Tibial artery (tissue), 4 donors: ENCODE measurements at regions of chr2 and their contacts with region 1.

Region 1: GRCh38 chr2:202249521-202249850 is 11.1 kb upstream of the SUMO1 start:
- DNase-seq: no peak
- H3K4me3 ChIP-seq: no peak overlapping the region
- H3K27ac ChIP-seq: no peak overlapping the region
- H3K4me1 ChIP-seq: no peaks in the 10 kb centered on the region
- H3K27me3 ChIP-seq: peaks cover 0 to 5% of the 10 kb centered on the region in 2 donors
- CTCF ChIP-seq: no peak

Region 2: GRCh38 chr2:201900362-201900761 is 349.1 kb before region 1 on chr2:
- intact Hi-C with region 1: no loop called
- DNase-seq: no peak
- H3K4me3 ChIP-seq: no peak overlapping the region
- H3K27ac ChIP-seq: no peak overlapping the region
- H3K4me1 ChIP-seq: no peaks in the 10 kb centered on the region
- H3K27me3 ChIP-seq: peaks cover 0 to 3% of the 10 kb centered on the region in 2 donors
- CTCF ChIP-seq: no peak

Region 3: GRCh38 chr2:202261531-202261930 is 12.0 kb after region 1 on chr2:
- intact Hi-C with region 1: loop called (anchors 2 kb)
- DNase-seq: no peak
- H3K4me3 ChIP-seq: no peak overlapping the region
- H3K27ac ChIP-seq: no peak overlapping the region
- H3K4me1 ChIP-seq: peaks cover 0 to 7% (median 0%) of the 10 kb centered on the region in 4 donors
- H3K27me3 ChIP-seq: no peaks in the 10 kb centered on the region
- CTCF ChIP-seq: no peak